Heart right ventricle (tissue), 16 donors: ENCODE measurements at regions of chr18 and their contacts with region 1.

Region 1: GRCh38 chr18:4444306-4444705 is 10.8 kb downstream of the DLGAP1 start:
- DNase-seq: no peak
- ATAC-seq: no peak
- H3K4me3 ChIP-seq: no peak overlapping the region
- H3K27ac ChIP-seq: no peak overlapping the region
- H3K4me1 ChIP-seq: no peaks in the 10 kb centered on the region
- H3K27me3 ChIP-seq: peaks cover 0 to 8% (median 0%) of the 10 kb centered on the region in 7 donors
- CTCF ChIP-seq: no peak

Region 2: DNA sequence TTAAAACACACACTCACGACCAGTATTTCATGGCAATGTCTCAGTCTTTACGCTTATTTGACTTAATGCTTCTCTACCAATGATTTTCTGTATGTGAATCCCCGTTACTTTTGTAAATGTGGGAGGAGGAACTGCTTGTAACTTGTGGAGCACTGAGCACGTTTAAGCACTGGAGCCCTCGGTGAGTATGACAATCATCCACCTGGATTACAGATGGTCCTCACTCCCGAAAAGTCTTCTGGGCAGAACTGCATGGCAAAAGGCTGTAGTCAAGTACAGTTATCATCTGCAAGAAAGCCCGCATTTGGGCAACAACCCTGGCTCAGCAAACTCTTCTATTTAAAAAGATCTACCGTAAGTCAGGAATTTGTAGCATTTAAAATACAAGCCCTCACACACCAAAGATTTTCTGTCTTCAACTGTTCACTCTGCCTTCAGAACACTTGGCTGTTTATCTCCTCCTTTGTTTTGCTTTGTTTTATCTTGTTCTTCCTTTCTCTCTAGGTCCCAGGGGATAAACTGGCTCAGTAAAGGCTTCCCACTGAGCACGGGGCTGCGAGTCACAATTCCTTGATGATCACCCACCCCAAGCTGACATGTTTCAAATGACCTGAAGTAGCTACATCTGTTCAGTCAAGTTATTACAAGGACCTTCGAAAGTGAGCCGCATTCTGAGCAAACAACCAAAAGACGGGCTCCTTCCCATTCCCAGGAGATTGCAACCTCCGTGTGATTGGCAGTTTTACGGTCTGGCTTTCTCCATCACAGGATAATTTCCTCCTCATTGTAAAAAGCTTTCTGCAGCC is 91.4 kb before region 1 on chr18:
- intact Hi-C with region 1: no loop called
- DNase-seq: no peak
- ATAC-seq: no peak
- H3K4me3 ChIP-seq: no peak overlapping the region
- H3K27ac ChIP-seq: no peak overlapping the region
- H3K4me1 ChIP-seq: no peaks in the 10 kb centered on the region
- H3K27me3 ChIP-seq: peaks cover 0 to 10% (median 0%) of the 10 kb centered on the region in 7 donors
- CTCF ChIP-seq: no peak

Region 3: DNA sequence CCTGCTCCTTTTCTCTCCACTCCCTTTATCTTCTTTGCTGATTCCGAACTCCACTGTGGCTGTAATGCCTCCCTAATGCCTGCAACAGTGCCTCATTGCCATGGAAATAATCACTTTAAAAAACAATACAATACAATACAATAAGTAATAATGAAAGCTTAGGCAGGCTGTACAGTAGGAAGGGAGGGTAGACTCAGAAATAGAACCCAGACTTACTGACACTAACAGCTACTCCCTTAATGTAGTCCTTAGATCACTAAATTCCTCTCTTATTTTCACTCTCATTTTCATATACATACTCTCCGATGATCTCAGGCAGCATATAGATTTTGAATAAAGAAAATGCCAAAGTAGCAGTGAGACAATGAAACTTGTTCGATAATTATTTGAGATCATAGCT is 59.4 kb before region 1 on chr18:
- intact Hi-C with region 1: loop called in 1 of 10 experiments (anchors 10 kb)
- DNase-seq: no peak
- ATAC-seq: no peak
- H3K4me3 ChIP-seq: no peak overlapping the region
- H3K27ac ChIP-seq: no peak overlapping the region
- H3K4me1 ChIP-seq: no peaks in the 10 kb centered on the region
- H3K27me3 ChIP-seq: no peaks in the 10 kb centered on the region
- CTCF ChIP-seq: no peak